ENCODE measurements at regions of chr1 and their contacts with region 1.

Region 1: GRCh38 chr1:9110669-9111356 is 18.1 kb downstream of the GPR157 start:
- DNase-seq: peak; percentile 87 to 89
- ATAC-seq: peak; percentile 46 to 84 (median 76)
- H3K4me3 ChIP-seq: no peak overlapping the region
- H3K27ac ChIP-seq: peak overlapping the region in 1 of 10 donors; percentile 5
- H3K4me1 ChIP-seq: peaks cover 0 to 29% (median 7%) of the 10 kb centered on the region in 9 donors
- H3K27me3 ChIP-seq: no peaks in the 10 kb centered on the region
- CTCF ChIP-seq: peak; percentile 88 to 98 (median 90)

Region 2: DNA sequence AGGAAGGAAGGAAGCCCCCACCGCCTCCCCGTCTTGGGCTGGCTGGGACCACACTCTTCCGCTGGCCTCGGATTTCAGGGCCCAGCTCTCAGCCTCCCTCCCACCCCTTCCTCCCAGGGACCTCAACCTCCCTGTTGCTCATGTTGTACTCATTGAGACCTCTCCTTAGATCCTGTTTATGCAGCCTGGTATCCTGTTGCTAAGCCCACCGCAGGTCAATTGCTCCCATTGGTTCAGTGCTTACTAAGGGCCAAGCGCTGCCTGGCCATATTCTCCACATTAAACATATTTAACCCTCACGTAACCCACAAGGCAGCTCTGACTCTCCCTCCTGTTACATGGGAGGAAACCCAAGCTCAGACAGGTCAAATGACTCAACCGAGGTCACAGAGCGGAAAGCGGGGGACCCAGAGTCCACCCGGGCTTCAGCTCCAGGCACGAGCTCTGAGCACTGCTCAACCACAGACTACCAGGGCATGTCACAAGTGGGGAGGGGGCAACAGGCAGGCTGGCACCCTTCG is 100.5 kb after region 1 on chr1:
- intact Hi-C with region 1: no loop called
- DNase-seq: no peak
- ATAC-seq: peak in 1 of 8 donors; percentile 33
- H3K4me3 ChIP-seq: no peak overlapping the region
- H3K27ac ChIP-seq: no peak overlapping the region
- H3K4me1 ChIP-seq: no peaks in the 10 kb centered on the region
- H3K27me3 ChIP-seq: peaks cover 0 to 15% (median 4%) of the 10 kb centered on the region in 7 donors
- CTCF ChIP-seq: no peak

Region 3: DNA sequence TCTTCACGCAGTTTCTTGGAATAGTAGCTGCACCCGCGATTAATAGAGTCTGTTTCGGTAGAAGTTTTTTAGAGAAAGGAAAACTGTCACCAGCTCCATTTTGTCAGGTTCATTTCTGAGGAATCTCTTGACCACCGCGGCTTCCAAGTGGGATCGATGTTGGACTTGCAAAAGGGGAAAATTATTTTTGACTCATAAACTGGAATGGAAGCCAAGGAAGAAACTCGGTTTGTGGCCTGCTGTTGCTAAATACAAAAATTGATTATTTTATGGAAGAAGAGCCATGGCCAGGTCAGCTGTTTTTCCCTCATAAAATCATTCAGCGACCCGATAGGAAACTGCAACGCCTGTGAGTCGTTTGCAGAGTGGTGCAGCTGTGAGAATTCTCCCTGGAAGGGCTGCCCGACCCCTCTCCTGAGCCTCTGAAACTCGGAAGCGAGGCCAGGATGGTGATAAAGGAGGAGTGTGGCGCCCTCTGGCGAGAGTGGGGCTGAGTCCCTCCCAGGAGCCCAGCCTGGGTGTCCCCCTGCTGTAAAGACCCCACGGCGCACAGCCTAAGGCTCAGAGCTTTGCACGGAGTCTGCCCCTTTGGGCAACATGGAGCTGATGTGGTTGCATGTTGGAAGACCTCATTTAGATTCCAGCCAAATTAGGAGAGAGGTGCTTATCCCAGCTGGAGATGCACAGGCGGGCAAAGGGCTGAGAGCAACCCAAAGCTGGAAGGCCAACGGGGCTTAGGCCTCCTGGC is 344.8 kb after region 1 on chr1:
- intact Hi-C with region 1: loop called in 1 of 10 experiments (anchors 10 kb)
- DNase-seq: peak; percentile 60 to 78
- ATAC-seq: peak; percentile 54 to 83 (median 78)
- H3K4me3 ChIP-seq: no peak overlapping the region
- H3K27ac ChIP-seq: no peak overlapping the region
- H3K4me1 ChIP-seq: peaks cover 0 to 12% (median 0%) of the 10 kb centered on the region in 9 donors
- H3K27me3 ChIP-seq: no peaks in the 10 kb centered on the region
- CTCF ChIP-seq: peak; percentile 54 to 84 (median 77)

Region 4: GRCh38 chr1:9486466-9487140 is 375.8 kb after region 1 on chr1:
- intact Hi-C with region 1: loop called in 2 of 10 experiments (anchors 10 kb)
- DNase-seq: no peak
- ATAC-seq: peak in 1 of 8 donors; percentile 35
- H3K4me3 ChIP-seq: no peak overlapping the region
- H3K27ac ChIP-seq: peak overlapping the region in 3 of 10 donors; percentile 1 to 41 (median 12)
- H3K4me1 ChIP-seq: peaks cover 0 to 6% (median 0%) of the 10 kb centered on the region in 9 donors
- H3K27me3 ChIP-seq: peaks cover 0 to 6% (median 0%) of the 10 kb centered on the region in 7 donors
- CTCF ChIP-seq: no peak